ENCODE measurements at regions of chr12 and their contacts with region 1.

Region 1: DNA sequence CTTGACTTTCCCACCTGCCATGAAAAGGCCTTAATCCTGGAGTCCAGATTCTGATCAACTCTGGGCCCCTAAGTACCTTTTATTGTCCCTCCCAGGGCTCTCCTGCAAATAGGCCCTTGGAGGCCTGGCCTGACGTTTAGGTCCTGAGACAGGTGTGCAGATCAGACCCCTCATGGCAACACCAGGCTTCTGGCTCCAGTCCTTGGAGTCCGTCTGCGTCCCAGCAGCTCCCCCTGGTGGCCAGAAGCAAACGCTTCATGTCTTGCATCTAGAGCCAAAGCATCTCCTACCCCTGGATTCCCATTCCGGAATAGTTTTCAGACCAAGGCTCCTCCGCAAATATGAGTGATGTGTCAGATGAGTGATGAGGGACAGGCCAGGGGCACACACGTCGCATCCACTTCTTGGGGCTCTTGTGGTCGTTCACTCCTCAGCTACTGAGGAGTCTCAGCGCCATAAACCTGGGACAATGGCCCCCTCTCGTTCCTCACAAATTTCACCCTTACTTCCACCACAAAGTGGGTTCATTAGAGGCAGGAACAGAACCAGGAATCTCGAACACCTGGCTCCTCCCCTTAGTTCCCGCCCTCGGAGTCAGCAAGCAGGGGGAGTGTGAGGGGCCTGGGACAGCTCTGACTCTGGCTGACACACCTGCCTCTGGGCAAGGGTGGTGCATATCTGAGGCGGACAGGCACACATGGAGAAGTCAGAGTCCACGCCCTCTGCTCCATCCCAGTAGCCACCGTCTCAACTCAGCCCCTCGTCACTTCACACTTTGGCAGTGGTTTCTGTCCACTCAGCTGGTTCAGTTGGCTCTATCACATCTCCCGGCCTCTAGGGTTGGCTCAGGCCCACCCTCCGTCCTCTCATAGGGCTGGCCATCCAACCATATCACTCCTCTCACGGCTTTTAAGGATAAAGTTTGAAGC is 77.9 kb upstream of the PWP1 start:
- DNase-seq: peak; percentile 78
- H3K4me3 ChIP-seq: no peak overlapping the region
- H3K27ac ChIP-seq: no peak overlapping the region
- H3K4me1 ChIP-seq: no peaks in the 10 kb centered on the region
- H3K27me3 ChIP-seq: no peaks in the 10 kb centered on the region

Region 2: DNA sequence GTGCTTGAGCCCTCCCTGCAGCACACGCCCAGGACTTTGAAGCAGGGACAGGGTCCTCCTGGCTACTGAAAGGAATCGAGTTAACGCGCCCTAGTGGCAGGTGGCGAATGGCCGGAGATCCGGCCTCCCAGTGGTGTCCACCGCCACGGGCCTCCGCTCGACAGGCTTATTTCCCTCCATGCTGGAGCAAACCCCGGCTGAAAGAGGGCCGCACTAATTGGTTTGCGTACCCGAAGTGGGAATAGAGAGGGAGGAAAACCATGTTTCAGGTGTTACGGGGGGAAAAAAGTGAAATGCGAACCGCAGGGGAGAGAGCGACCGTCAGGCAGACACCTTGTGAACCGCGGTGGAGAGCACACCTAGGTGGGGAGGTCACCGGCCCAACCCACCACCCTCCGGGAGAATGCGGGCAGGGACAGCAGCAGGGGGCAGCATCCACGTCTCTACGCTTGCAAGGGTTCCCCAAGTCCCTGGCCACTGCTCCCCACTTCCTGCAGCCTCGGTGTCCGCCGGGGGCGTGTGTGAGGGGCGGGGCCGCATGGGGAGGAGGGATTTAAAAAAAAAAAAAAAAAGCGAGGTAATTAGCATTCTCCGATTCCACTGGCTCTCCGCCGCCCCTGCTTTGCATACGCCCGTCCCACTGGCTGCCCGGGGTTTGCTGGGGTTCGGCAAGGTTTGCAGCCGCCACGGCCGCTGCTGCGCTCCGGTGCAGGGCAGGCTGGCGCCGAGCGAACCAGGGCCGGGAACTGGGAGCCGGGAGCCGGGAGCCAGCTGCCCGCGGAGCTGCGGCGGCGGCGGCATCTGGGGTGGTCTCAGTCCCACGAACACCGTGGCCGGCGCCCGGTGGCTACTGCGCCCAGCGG is 289.7 kb before region 1 on chr12:
- in situ Hi-C with region 1: no loop called
- DNase-seq: peak; percentile 93
- H3K4me3 ChIP-seq: peak overlapping the region; percentile 69
- H3K27ac ChIP-seq: no peak overlapping the region
- H3K4me1 ChIP-seq: peaks cover 12% of the 10 kb centered on the region
- H3K27me3 ChIP-seq: peaks cover 19% of the 10 kb centered on the region

Region 3: GRCh38 chr12:107402041-107403022 is 205.4 kb before region 1 on chr12:
- in situ Hi-C with region 1: loop called (anchors 10 kb)
- DNase-seq: peak; percentile 78
- H3K4me3 ChIP-seq: no peak overlapping the region
- H3K27ac ChIP-seq: no peak overlapping the region
- H3K4me1 ChIP-seq: peaks cover 8% of the 10 kb centered on the region
- H3K27me3 ChIP-seq: no peaks in the 10 kb centered on the region

Measured in GM23248 (cell line).